ENCODE measurements at regions of chr22 and their contacts with region 1.

Region 1: DNA sequence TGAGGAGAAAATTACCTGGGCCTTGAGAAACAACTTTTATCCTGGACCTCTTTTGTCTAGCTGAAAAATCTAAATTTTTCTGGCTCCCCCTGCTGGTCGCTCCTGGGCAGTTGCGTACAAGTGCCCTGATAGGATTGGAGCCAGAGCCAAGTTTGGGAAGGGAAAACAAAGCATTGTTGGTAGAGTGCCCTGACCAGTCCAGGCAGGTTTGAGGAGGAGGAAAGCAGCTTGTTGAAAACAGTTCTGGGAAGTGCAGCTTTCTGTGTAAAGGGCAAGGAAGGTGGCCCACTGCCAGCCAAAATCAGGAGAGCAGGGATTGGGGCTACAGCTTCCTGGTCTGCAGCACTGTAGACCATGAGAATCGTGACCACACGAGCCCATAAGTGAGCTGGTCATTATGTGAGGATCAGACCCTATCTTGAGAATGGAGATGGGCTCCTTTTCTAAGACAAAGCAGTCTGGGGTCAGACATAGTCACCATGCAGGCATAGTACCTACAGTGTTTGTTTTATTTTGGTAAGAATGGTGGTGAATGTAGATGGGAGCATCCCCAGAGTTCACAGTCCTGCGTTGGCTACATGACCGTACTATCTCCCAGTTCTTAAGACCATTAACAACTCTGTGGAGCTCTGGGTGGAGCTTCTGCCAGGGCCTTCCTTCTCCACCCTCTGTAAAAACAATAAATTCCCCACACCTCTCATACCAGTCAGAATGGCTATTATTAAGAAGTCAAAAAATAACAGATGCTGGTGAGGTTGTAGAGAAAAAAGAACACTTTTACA is 21.3 kb upstream of the PIK3IP1 start:
- DNase-seq: peak; percentile 88
- H3K4me3 ChIP-seq: no peak overlapping the region
- H3K27ac ChIP-seq: no peak overlapping the region
- H3K4me1 ChIP-seq: peaks cover 2% of the 10 kb centered on the region
- H3K27me3 ChIP-seq: no peaks in the 10 kb centered on the region
- CTCF ChIP-seq: peak; percentile 84 to 86
- POLR2A ChIP-seq: no peak

Region 2: DNA sequence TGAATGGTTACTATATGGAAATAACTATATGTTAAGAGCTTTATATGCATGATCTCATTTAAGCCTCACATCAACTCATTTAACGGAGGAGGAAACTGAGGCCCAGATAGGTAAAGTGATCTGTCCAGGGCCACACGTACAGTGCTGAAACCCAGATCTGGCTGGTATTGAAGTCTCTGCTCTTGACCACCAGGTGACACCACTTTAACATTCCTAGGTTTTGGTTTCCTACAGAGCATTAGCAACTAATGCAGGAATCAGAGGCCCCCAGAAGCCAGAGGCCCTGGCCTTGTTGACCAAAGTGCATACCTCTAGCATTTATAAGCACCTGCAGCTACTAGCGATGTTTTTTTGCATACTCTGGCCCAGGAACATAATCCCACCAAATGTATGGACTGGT is 114.4 kb before region 1 on chr22:
- CTCF ChIA-PET with region 1: interaction called, 5 read pairs
- POLR2A ChIA-PET with region 1: no interaction called
- dilution Hi-C with region 1: no loop called
- intact Hi-C with region 1: loop called (anchors 2 kb)
- DNase-seq: no peak
- H3K4me3 ChIP-seq: no peak overlapping the region
- H3K27ac ChIP-seq: no peak overlapping the region
- H3K4me1 ChIP-seq: no peaks in the 10 kb centered on the region
- H3K27me3 ChIP-seq: no peaks in the 10 kb centered on the region
- CTCF ChIP-seq: peak; percentile 26 to 31
- POLR2A ChIP-seq: no peak

Region 3: DNA sequence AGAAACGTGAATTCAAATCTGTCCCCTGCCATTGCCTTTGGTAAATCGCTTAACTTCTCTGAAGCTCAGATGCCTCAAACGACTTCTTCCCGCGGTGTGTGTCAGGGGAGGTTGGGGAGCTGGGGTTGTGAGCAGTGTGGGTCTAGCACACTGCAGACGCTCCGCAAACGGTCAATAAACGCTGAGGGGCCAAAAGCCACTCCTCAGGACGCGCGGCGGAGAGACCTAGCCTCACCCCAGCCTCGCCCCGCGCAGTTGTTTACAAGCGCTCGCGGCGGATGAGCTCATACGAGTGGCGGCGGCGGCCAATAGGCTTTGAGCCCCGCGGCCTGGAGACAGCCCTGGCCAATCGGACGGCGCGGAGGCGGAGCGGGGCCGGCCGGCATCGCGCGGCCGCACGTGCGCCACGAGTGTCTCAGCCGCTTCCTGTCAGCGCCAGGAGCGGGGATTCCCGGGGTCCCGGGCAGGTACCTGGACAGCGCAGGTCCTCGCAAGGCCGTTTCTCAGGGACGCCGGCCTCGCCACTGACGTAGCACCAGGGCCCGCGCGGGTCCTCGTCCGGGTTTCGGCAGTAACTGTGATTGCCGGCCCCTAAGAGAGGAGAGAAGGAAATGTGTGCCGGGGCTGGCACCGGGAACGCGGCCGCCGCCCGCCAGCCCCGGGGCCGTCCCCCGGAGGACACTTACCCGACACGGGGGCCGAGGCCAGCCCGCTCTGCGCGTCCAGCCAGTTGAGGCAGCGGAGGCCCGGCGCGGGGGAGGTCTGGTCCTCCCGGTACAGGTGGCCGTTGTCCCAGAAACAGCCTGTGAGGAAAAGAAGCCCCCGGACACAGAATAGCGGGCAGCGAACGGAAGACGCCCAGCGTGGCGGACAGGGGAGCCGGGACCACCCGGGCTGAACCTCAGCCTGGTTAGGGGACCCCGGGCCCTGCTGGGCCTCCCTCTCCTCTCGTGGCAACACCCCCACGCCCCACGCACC is 22.8 kb before region 1 on chr22:
- CTCF ChIA-PET with region 1: interaction called, 79 read pairs
- POLR2A ChIA-PET with region 1: interaction called, 6 read pairs
- dilution Hi-C with region 1: no loop called
- intact Hi-C with region 1: loop called (anchors 1 kb)
- DNase-seq: peak; percentile 96
- H3K4me3 ChIP-seq: peak overlapping the region; percentile 41 to 69 (median 45)
- H3K27ac ChIP-seq: peak overlapping the region; percentile 50
- H3K4me1 ChIP-seq: peaks cover 41% of the 10 kb centered on the region
- H3K27me3 ChIP-seq: no peaks in the 10 kb centered on the region
- CTCF ChIP-seq: no peak
- POLR2A ChIP-seq: no peak

Region 4: GRCh38 chr22:31302006-31302405 is 11.6 kb before region 1 on chr22:
- CTCF ChIA-PET with region 1: interaction called, 52 read pairs
- POLR2A ChIA-PET with region 1: no interaction called
- dilution Hi-C with region 1: no loop called
- intact Hi-C with region 1: no loop called
- DNase-seq: no peak
- H3K4me3 ChIP-seq: no peak overlapping the region
- H3K27ac ChIP-seq: no peak overlapping the region
- H3K4me1 ChIP-seq: no peaks in the 10 kb centered on the region
- H3K27me3 ChIP-seq: peaks cover 11 to 13% of the 10 kb centered on the region in 2 experiments
- CTCF ChIP-seq: no peak
- POLR2A ChIP-seq: no peak

Region 5: GRCh38 chr22:31337161-31337560 is 23.6 kb after region 1 on chr22:
- CTCF ChIA-PET with region 1: interaction called, 12 read pairs
- POLR2A ChIA-PET with region 1: no interaction called
- dilution Hi-C with region 1: no loop called
- intact Hi-C with region 1: no loop called
- DNase-seq: no peak
- H3K4me3 ChIP-seq: no peak overlapping the region
- H3K27ac ChIP-seq: no peak overlapping the region
- H3K4me1 ChIP-seq: no peaks in the 10 kb centered on the region
- H3K27me3 ChIP-seq: no peaks in the 10 kb centered on the region
- CTCF ChIP-seq: no peak
- POLR2A ChIP-seq: no peak

Region 6: GRCh38 chr22:31354515-31354914 is 41.0 kb after region 1 on chr22:
- CTCF ChIA-PET with region 1: no interaction called
- POLR2A ChIA-PET with region 1: no interaction called
- dilution Hi-C with region 1: no loop called
- intact Hi-C with region 1: no loop called
- DNase-seq: no peak
- H3K4me3 ChIP-seq: no peak overlapping the region
- H3K27ac ChIP-seq: no peak overlapping the region
- H3K4me1 ChIP-seq: no peaks in the 10 kb centered on the region
- H3K27me3 ChIP-seq: peaks cover 5 to 7% of the 10 kb centered on the region in 2 experiments
- CTCF ChIP-seq: no peak
- POLR2A ChIP-seq: no peak

Measured in endothelial cell of umbilical vein (primary cell).